GM12878 (cell line): ENCODE measurements at regions of chr1 and their contacts with region 1.

Region 1: GRCh38 chr1:160085686-160086455 is 4.5 kb downstream of the KCNJ9 start:
- DNase-seq: no peak
- ATAC-seq: peak; percentile 87
- H3K4me3 ChIP-seq: no peak overlapping the region
- H3K27ac ChIP-seq: no peak overlapping the region
- H3K4me1 ChIP-seq: no peaks in the 10 kb centered on the region
- H3K27me3 ChIP-seq: peaks cover 0 to 2% of the 10 kb centered on the region in 2 experiments; a peak in 3 of 4 replicates
- CTCF ChIP-seq: peak; percentile 82 to 89 (median 88)
- EP300 ChIP-seq: no peak
- POLR2A ChIP-seq: no peak
- RAD21 ChIP-seq: peak; percentile 59

Region 2: DNA sequence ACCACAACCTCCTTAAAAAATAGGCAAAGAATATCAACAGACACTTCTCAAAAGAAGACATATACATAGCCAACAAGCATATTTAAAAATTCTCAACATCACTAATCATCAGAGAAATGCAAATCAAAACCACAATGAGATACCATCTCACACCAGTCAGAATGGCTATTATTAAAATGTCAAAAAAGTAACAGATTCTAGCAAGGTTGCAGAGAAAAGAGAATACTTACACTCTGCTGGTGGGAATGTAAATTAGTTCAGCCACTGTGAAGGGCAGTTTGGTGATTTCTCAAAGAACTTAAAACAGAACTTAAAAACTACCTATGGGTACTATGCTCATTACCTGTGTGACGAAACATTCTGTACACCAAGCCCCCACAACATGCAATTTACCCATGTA is 1775.2 kb before region 1 on chr1:
- CTCF ChIA-PET with region 1: no interaction called
- POLR2A ChIA-PET with region 1: no interaction called
- RAD21 ChIA-PET with region 1: no interaction called
- SMC1A ChIA-PET with region 1: no interaction called
- in situ Hi-C with region 1: no loop called
- intact Hi-C with region 1: no loop called
- DNase-seq: no peak
- ATAC-seq: peak; percentile 73
- H3K4me3 ChIP-seq: no peak overlapping the region
- H3K27ac ChIP-seq: no peak overlapping the region
- H3K4me1 ChIP-seq: no peaks in the 10 kb centered on the region
- H3K27me3 ChIP-seq: no peaks in the 10 kb centered on the region
- CTCF ChIP-seq: no peak
- EP300 ChIP-seq: no peak
- POLR2A ChIP-seq: no peak
- RAD21 ChIP-seq: no peak

Region 3: DNA sequence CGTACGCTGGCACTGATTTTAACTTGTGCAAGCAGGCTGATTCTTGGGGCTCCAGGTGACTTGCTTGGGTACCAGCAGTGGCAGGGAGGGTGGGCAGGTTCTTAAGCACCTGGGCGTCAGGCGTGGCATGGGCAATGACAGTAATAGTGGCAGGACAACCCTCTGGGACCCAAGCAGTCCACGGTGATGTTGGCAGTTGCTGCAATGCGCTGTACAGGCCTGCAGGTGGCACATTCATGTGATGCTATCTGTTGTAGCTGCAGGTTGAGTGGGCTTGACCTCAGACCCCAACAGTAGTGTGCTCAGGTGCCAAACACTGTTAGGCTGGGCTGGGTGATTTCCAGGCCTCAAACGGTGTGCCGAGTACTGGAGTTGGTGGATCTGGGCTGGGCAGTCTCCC is 664.0 kb before region 1 on chr1:
- CTCF ChIA-PET with region 1: no interaction called
- POLR2A ChIA-PET with region 1: no interaction called
- RAD21 ChIA-PET with region 1: no interaction called
- SMC1A ChIA-PET with region 1: no interaction called
- in situ Hi-C with region 1: no loop called
- intact Hi-C with region 1: no loop called
- DNase-seq: no peak
- ATAC-seq: peak; percentile 38; the same call in 1 of the 3 replicates
- H3K4me3 ChIP-seq: no peak overlapping the region
- H3K27ac ChIP-seq: no peak overlapping the region
- H3K4me1 ChIP-seq: no peaks in the 10 kb centered on the region
- H3K27me3 ChIP-seq: no peaks in the 10 kb centered on the region
- CTCF ChIP-seq: peak in 2 of 3 experiments; percentile 21 to 29; a peak in 3 of 6 replicates
- EP300 ChIP-seq: no peak
- POLR2A ChIP-seq: no peak
- RAD21 ChIP-seq: no peak

Region 4: GRCh38 chr1:159936273-159936904 is 149.5 kb before region 1 on chr1:
- CTCF ChIA-PET with region 1: interaction called, 6 read pairs
- POLR2A ChIA-PET with region 1: no interaction called
- RAD21 ChIA-PET with region 1: no interaction called
- SMC1A ChIA-PET with region 1: interaction called, 3 read pairs
- in situ Hi-C with region 1: no loop called
- intact Hi-C with region 1: loop called (anchors 2 kb)
- DNase-seq: no peak
- ATAC-seq: peak; percentile 86
- H3K4me3 ChIP-seq: no peak overlapping the region
- H3K27ac ChIP-seq: no peak overlapping the region
- H3K4me1 ChIP-seq: peaks cover 23% of the 10 kb centered on the region
- H3K27me3 ChIP-seq: 0 out of 4 replicates have a peak, but pooled peaks cover 0 to 2% of the 10 kb centered on the region in 2 experiments
- CTCF ChIP-seq: peak; percentile 98; a peak in 5 of 6 replicates
- EP300 ChIP-seq: no peak
- POLR2A ChIP-seq: no peak
- RAD21 ChIP-seq: peak; percentile 87

Region 5: GRCh38 chr1:159996653-159997052 is 89.2 kb before region 1 on chr1:
- CTCF ChIA-PET with region 1: no interaction called
- POLR2A ChIA-PET with region 1: no interaction called
- RAD21 ChIA-PET with region 1: no interaction called
- SMC1A ChIA-PET with region 1: no interaction called
- in situ Hi-C with region 1: no loop called
- intact Hi-C with region 1: no loop called
- DNase-seq: no peak
- ATAC-seq: no peak
- H3K4me3 ChIP-seq: no peak overlapping the region
- H3K27ac ChIP-seq: no peak overlapping the region
- H3K4me1 ChIP-seq: no peaks in the 10 kb centered on the region
- H3K27me3 ChIP-seq: no peaks in the 10 kb centered on the region; a peak in 1 of 4 replicates
- CTCF ChIP-seq: no peak
- EP300 ChIP-seq: no peak
- POLR2A ChIP-seq: no peak
- RAD21 ChIP-seq: no peak

Region 6: DNA sequence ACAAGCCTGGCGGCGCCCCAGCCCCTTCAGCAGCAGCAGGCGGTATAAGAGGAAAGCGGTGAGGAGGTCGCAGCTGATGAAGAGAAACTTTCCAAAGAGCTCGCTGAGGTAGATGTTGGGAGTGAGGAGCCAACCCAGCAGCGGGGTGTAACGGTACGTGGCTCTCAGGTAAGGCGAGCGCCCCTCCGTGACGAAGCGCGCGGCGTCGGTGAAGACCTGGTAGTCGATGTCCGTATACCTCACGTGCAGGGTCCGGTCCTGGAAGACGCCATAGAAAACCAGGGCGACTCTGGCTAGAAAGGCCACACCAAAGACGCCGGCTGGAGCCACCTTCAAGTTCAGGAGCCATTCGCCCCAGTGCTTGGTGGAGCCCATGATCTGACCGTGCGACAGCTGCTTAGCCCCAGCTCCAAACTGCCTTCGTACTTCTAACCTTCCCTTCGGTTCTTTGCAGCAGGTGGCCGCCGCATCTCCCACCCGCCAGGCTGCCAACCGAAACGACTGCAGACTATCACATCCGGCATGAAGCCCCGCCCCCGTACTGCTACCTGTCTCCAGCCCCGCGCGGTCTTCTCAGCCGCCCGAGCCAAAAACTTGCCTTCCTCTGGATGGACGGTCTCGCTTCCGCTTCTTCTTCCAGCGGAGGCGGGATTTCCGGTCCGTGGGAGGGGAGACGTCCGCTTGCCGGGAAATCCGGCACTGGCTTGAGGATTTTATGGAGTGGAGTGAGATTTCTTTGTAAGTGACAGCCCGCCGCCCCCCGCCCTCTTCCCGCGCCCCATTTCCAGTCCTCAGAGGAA is 54.3 kb before region 1 on chr1 and contains the start of gene PIGM:
- CTCF ChIA-PET with region 1: interaction called, 1,035 read pairs
- POLR2A ChIA-PET with region 1: no interaction called
- RAD21 ChIA-PET with region 1: no interaction called
- SMC1A ChIA-PET with region 1: no interaction called
- in situ Hi-C with region 1: no loop called
- intact Hi-C with region 1: no loop called
- DNase-seq: peak; percentile 66
- ATAC-seq: peak; percentile 97
- H3K4me3 ChIP-seq: peak within 1 kb of the TSS; percentile 97
- H3K27ac ChIP-seq: peak within 1 kb of the TSS; percentile 48
- H3K4me1 ChIP-seq: peaks cover 5% of the 10 kb centered on the region; the same call in 1 of the 2 replicates
- H3K27me3 ChIP-seq: no peaks in the 10 kb centered on the region
- CTCF ChIP-seq: no peak
- EP300 ChIP-seq: no peak
- POLR2A ChIP-seq: peak; percentile 79
- RAD21 ChIP-seq: no peak
- polyA plus RNA-seq, gene PIGM: 2.6 to 3.7 TPM

Region 7: GRCh38 chr1:160219062-160219929 is 133.4 kb after region 1 on chr1:
- CTCF ChIA-PET with region 1: interaction called, 11 read pairs
- POLR2A ChIA-PET with region 1: no interaction called
- RAD21 ChIA-PET with region 1: no interaction called
- SMC1A ChIA-PET with region 1: no interaction called
- in situ Hi-C with region 1: no loop called
- intact Hi-C with region 1: no loop called
- DNase-seq: no peak
- ATAC-seq: peak; percentile 44
- H3K4me3 ChIP-seq: no peak overlapping the region
- H3K27ac ChIP-seq: no peak overlapping the region
- H3K4me1 ChIP-seq: no peaks in the 10 kb centered on the region
- H3K27me3 ChIP-seq: no peaks in the 10 kb centered on the region
- CTCF ChIP-seq: peak; percentile 21 to 34 (median 34); a peak in 3 of 6 replicates
- EP300 ChIP-seq: no peak
- POLR2A ChIP-seq: no peak
- RAD21 ChIP-seq: peak; percentile 43